Vagina (tissue), 2 donors: ENCODE measurements at regions of chr16 and their contacts with region 1.

Region 1: DNA sequence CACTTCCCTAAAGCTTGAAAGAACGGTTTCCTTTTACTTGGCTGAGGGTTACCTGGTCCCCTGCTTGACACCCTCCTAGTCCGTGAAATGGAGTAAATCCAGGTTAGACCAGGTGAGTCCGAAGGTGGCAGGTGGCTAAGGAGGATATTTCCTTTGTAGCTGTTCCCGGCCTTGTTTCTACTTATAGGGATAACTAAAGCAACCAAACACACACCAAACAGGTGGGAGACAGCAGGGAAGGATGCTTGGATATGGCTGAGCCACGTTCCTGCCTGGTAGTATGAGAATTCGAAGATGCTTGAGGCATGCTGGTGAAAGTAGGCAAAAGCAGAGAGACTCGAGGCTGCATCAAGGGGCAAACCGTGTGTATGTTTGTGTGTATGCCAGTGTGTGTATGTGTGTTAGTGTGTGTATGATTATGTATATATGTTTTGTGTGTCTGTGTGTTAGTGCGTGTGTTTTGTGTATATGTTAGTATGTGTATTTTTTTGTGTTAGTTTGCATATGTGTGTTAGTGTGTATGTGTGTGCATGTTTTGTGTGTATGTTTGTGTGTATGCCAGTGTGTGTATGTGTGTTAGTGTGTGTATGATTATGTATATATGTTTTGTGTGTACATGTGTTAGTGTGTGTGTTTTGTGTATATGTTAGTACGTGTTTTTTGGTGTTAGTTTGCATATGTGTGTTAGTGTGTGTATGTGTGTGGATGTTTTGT is 28.9 kb downstream of the RBFOX1 start:
- DNase-seq: no peak
- H3K4me3 ChIP-seq: no peak overlapping the region
- H3K27ac ChIP-seq: no peak overlapping the region
- H3K4me1 ChIP-seq: peaks cover 16% of the 10 kb centered on the region
- H3K27me3 ChIP-seq: no peaks in the 10 kb centered on the region
- CTCF ChIP-seq: no peak
- POLR2A ChIP-seq: no peak

Region 2: DNA sequence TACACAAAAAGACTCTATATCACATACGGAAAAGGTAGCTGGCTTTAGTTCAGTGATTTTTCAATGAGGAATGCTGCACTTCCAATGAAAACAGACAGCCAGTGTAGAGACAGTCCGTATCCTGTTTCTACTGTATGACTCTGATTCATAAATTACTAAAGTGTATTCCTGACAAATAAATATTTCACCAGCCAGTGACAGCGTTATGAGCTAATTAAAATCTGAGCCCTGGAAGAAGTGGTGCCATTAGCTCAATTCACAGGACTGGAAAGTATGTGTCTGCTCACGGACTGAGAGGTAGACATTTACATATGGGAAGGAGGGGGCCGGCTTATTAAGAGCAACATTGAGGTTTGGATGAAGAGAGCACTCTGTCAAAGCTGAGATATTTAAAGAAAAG is 236.9 kb before region 1 on chr16:
- intact Hi-C with region 1: no loop called
- DNase-seq: no peak
- H3K4me3 ChIP-seq: no peak overlapping the region
- H3K27ac ChIP-seq: no peak overlapping the region
- H3K4me1 ChIP-seq: no peaks in the 10 kb centered on the region
- H3K27me3 ChIP-seq: no peaks in the 10 kb centered on the region
- CTCF ChIP-seq: no peak
- POLR2A ChIP-seq: no peak

Region 3: GRCh38 chr16:7294020-7294419 is 67.6 kb before region 1 on chr16:
- intact Hi-C with region 1: loop called (anchors 1 kb)
- DNase-seq: no peak
- H3K4me3 ChIP-seq: no peak overlapping the region
- H3K27ac ChIP-seq: no peak overlapping the region
- H3K4me1 ChIP-seq: no peaks in the 10 kb centered on the region
- H3K27me3 ChIP-seq: no peaks in the 10 kb centered on the region
- CTCF ChIP-seq: no peak
- POLR2A ChIP-seq: no peak

Region 4: GRCh38 chr16:7405166-7405852 is 43.7 kb after region 1 on chr16:
- intact Hi-C with region 1: no loop called
- DNase-seq: no peak
- H3K4me3 ChIP-seq: no peak overlapping the region
- H3K27ac ChIP-seq: no peak overlapping the region
- H3K4me1 ChIP-seq: no peaks in the 10 kb centered on the region
- H3K27me3 ChIP-seq: no peaks in the 10 kb centered on the region
- CTCF ChIP-seq: no peak
- POLR2A ChIP-seq: no peak